Endothelial cell of umbilical vein (primary cell): ENCODE measurements at regions of chr4 and their contacts with region 1.

Region 1: GRCh38 chr4:24584175-24584850 is at the start of gene DHX15:
- DNase-seq: peak; percentile 97
- H3K4me3 ChIP-seq: peak within 1 kb of the TSS; percentile 82 to 97 (median 92)
- H3K27ac ChIP-seq: peak within 1 kb of the TSS; percentile 79
- H3K4me1 ChIP-seq: peaks cover 18% of the 10 kb centered on the region
- H3K27me3 ChIP-seq: no peaks in the 10 kb centered on the region
- CTCF ChIP-seq: no peak
- POLR2A ChIP-seq: peak; percentile 90
- total RNA-seq, gene DHX15: 148 and 152 TPM in 2 replicates

Region 2: GRCh38 chr4:24472514-24473308 is 111.6 kb before region 1 on chr4:
- CTCF ChIA-PET with region 1: interaction called, 4 read pairs
- POLR2A ChIA-PET with region 1: interaction called, 3 read pairs
- dilution Hi-C with region 1: no loop called
- intact Hi-C with region 1: loop called (anchors 2 kb)
- DNase-seq: peak; percentile 63
- H3K4me3 ChIP-seq: peak overlapping the region; percentile 19 to 42 (median 33)
- H3K27ac ChIP-seq: no peak overlapping the region
- H3K4me1 ChIP-seq: peaks cover 15% of the 10 kb centered on the region
- H3K27me3 ChIP-seq: peaks cover 34 to 42% of the 10 kb centered on the region in 2 experiments
- CTCF ChIP-seq: peak; percentile 79 to 81
- POLR2A ChIP-seq: no peak

Region 3: GRCh38 chr4:24557026-24558025 is 27.0 kb before region 1 on chr4:
- CTCF ChIA-PET with region 1: interaction called, 13 read pairs
- POLR2A ChIA-PET with region 1: no interaction called
- dilution Hi-C with region 1: no loop called
- intact Hi-C with region 1: loop called (anchors 2 kb)
- DNase-seq: peak; percentile 27
- H3K4me3 ChIP-seq: no peak overlapping the region
- H3K27ac ChIP-seq: no peak overlapping the region
- H3K4me1 ChIP-seq: peaks cover 19% of the 10 kb centered on the region
- H3K27me3 ChIP-seq: no peaks in the 10 kb centered on the region
- CTCF ChIP-seq: no peak
- POLR2A ChIP-seq: no peak

Region 4: DNA sequence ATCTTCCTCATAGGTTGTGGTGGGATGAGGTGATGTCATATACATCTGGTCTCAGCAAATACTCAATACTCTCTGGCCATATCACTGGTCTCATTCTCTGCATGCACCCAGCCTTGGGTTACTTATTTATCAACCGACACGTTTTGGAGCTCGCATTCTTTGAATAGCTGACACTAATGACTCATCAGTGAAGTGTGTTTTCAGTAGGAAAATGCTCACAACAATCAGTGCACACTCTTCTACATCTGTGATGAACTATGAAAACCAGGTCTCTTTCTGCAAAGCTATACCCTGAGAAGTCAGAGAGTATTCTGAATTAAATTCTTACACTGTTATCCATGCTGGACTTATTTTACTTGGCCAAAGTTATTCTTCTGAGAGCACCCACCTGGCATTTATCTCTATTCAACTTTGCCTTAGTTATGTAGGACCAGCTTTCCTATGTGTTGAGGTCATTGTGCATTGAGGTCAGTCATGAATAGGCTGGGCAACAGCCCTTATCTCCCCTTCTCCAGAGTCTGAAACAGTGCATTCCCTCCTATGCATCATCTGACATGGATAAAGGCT is 58.8 kb after region 1 on chr4:
- CTCF ChIA-PET with region 1: no interaction called
- POLR2A ChIA-PET with region 1: no interaction called
- dilution Hi-C with region 1: no loop called
- intact Hi-C with region 1: loop called (anchors 1 kb)
- DNase-seq: no peak
- H3K4me3 ChIP-seq: no peak overlapping the region
- H3K27ac ChIP-seq: peak overlapping the region; percentile 35
- H3K4me1 ChIP-seq: peaks cover 18% of the 10 kb centered on the region
- H3K27me3 ChIP-seq: peaks cover 2 to 3% of the 10 kb centered on the region in 2 experiments
- CTCF ChIP-seq: no peak
- POLR2A ChIP-seq: no peak

Region 5: DNA sequence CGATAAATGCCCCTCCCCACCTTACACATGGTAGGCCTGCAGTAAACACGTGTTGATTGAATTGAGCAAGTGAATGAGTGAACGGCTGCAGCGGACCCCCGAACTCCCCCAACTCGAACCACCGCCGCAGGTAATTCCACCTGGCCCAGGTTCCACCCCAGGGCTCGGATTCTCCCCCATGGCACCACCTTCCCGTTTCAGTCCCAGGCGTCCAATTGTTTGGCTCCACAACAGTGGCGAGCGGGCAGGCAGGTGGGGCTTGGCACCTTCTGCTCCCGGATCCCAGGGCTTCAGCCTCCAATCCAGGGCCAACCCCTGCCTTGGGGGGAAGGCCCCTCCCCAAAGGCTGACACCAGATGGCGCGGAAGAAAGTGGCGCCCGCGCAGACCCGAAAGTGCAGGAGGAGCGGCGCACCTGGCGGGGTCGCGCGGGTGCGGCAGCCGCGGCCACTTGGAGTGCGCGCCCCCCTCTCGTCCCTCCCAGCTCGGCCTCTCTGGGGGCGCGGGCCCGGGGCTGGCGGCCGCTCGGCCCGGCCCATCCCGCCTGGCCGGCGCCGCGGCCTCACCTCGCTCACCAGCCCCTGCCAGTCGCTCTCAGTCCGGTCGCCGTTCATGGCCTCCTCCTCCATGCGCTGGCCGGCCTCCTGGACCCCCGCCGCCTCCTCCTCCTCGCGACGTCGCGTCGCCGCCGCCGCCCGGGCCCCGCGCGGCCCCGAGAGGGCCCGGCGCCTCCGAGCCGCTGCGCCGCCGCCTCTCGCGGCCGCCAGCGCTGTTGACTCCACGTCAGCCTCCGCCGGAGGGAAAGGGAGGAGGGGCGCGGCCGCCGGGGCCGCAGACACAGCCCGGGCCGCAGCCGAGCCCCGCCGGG is 328.2 kb after region 1 on chr4 and contains the start of gene CCDC149:
- CTCF ChIA-PET with region 1: no interaction called
- POLR2A ChIA-PET with region 1: no interaction called
- dilution Hi-C with region 1: no loop called
- intact Hi-C with region 1: loop called (anchors 1 kb)
- DNase-seq: peak; percentile 43
- H3K4me3 ChIP-seq: peak within 1 kb of the TSS; percentile 44 to 73 (median 50)
- H3K27ac ChIP-seq: peak within 1 kb of the TSS; percentile 13
- H3K4me1 ChIP-seq: peaks cover 5% of the 10 kb centered on the region
- H3K27me3 ChIP-seq: peaks cover 0 to 2% of the 10 kb centered on the region in 2 experiments
- CTCF ChIP-seq: no peak
- POLR2A ChIP-seq: no peak
- total RNA-seq, gene CCDC149: 11.3 and 12.5 TPM in 2 replicates

Region 6: DNA sequence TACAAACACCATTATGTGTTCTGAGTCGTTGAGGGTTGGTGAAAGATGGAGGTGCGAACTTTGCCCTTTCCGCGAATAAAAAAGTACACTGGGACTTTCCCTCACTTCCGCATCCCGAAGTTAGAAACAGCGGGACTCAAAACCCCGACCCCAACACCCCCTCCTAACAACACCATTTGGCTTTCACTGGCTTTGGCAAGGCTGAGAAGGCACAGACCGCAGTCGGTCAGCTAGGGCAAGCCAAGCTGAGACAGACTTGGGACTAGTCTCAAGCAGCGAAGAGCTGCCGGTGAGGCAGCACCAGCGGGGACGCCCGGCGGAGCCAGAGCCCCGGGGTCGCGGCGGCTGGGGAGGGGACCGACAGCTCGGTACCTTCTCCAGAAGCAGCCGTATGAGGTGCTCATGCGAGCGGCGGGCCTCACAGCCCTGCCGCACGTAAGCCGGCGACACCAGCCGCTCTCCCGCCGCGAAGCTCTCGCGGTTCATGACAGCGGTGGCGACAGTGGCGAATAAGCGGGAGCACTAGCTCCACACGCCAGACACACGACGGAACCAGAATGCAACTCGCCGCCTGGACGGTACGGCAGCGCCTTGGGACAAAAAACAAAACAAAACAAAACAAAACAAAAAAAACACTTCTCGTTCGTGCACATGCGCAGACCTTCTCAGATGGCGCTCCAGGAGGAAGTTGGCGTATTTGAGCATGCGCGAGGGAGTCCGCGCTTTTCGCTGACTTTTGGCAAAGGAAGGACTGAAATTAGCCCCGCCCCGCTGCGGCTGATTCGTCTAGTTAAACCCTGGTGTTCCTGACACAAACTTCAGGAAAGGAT is 575.8 kb after region 1 on chr4 and contains the start of gene SEPSECS:
- CTCF ChIA-PET with region 1: no interaction called
- POLR2A ChIA-PET with region 1: no interaction called
- dilution Hi-C with region 1: no loop called
- intact Hi-C with region 1: loop called (anchors 5 kb)
- DNase-seq: peak; percentile 99
- H3K4me3 ChIP-seq: peak within 1 kb of the TSS; percentile 39 to 94 (median 84)
- H3K27ac ChIP-seq: peak within 1 kb of the TSS; percentile 81
- H3K4me1 ChIP-seq: peaks cover 7% of the 10 kb centered on the region
- H3K27me3 ChIP-seq: no peaks in the 10 kb centered on the region
- CTCF ChIP-seq: no peak
- POLR2A ChIP-seq: peak; percentile 87
- total RNA-seq, gene SEPSECS: 5.8 and 8.3 TPM in 2 replicates

Region 7: DNA sequence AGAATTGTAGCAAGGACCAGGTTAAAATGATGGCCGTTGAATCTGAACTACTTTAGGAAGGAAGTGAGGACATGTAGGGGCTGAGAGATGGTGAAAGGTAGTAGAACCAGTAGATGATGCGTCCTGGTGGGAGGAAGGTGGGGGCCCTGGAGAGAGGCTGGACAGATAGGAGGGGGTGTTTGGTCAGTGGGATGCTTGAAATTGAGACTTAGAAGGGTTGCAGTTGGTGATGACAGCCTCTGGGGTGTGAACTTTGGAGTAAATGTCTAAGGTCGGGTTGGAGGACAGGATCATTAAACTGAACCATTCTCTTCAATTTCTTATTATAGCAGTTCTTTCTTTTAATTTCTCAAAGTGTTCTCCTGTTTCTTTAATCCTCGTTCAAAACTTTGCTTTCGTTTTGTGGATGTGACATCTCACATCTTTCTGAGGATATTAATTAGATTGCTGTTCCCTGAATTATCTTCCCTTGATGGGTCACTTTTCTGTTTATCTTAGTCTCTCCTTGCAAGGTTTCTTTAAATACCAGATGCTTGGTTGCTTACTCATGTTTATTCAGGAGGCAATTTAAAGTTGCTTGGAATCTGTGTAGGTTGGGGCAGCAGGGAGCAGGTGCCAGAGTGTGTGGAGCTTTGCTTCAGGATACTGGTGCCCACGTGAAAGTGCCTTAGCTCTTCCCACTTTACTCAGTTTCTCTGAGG is 816.5 kb after region 1 on chr4:
- CTCF ChIA-PET with region 1: no interaction called
- POLR2A ChIA-PET with region 1: no interaction called
- dilution Hi-C with region 1: no loop called
- intact Hi-C with region 1: no loop called
- DNase-seq: no peak
- H3K4me3 ChIP-seq: no peak overlapping the region
- H3K27ac ChIP-seq: no peak overlapping the region
- H3K4me1 ChIP-seq: no peaks in the 10 kb centered on the region
- H3K27me3 ChIP-seq: no peaks in the 10 kb centered on the region
- CTCF ChIP-seq: no peak
- POLR2A ChIP-seq: no peak